GM13977 (cell line): ENCODE measurements at regions of chr2 and their contacts with region 1.

Region 1: DNA sequence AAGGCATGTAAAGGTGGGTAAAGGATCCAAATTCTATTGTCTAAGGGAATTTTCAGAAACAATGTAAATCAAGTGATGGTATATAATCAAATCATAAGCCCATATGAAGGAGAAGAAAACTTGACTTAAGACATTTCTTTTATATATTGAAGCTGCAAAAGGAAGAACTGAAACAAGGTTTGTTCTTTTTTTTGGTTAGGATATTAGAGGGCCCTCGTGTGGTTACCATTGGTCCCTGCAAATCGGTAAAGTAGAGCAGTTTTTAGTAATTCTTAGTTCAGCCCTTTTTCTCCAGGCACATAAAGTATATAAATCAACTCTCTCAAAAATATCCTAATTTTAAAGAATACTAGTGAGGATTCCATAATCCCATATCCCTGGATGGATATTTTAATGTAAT is 105.6 kb upstream of the STK17B start:
- DNase-seq: peak; percentile 40
- CTCF ChIP-seq: peak; percentile 61

Region 2: DNA sequence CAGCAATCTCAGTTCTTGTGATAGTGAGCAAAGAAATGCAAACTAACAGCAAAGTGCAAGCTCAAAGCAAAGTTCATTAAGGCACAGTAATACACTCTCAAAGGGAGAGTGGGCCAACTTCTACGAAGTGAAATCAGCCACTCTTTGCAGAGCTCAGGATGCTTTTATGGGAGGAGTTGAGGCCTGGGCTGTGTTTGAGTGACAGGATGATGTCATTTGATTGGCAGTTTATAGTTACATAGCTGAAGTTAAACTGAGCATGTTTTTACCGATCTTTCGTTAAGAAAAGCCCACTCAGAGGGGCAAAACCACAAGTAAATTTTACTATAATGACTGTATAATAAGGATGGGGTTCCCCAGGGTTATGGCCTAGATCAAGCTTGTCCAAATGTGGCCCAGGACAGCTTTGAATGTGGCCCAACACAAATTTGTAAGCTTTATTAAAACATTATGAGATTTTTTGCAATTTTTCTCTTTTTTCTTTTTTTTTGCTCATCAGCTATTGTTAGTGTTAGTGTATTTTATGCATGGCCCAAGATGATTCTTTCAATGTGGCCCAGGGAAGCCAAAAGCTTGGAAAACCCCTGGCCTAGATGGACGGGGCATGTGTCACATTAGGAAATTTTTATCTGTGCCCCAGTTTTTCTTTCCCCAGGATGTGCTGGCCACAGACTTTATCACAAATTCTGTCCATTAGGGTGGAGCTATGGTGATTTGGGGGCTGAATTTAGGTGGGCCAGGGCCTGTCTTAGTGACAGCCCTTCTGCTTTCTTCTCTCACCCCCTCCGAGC is 200.0 kb before region 1 on chr2:
- in situ Hi-C with region 1: loop called (anchors 5 kb)
- DNase-seq: peak; percentile 49
- CTCF ChIP-seq: no peak

Region 3: GRCh38 chr2:196750982-196751635 is 474.1 kb after region 1 on chr2:
- in situ Hi-C with region 1: loop called (anchors 25 kb)
- DNase-seq: peak; percentile 64
- CTCF ChIP-seq: peak; percentile 88